Heart right ventricle (tissue), 16 donors: ENCODE measurements at regions of chr20 and their contacts with region 1.

Region 1: DNA sequence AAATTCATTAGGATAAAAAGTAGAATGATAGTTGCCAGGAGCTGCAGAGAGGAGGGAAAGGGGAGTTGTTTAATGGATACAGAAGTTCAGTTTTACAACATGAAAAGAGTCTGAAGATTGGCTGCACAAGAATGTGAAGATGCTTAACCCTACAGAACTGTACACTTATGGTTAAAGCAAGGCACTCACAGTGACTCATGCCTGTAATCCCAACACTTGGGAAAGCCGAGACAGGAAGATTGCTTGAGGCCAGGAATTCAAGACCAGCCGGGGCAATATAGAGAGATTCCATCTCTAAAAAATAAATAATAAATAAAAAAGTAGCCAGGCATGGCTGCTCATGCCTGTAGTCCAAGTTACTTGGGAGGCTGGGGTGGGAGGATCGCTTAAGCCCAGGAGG is 174.0 kb downstream of the TASP1 start:
- DNase-seq: no peak
- ATAC-seq: no peak
- H3K4me3 ChIP-seq: no peak overlapping the region
- H3K27ac ChIP-seq: no peak overlapping the region
- H3K4me1 ChIP-seq: peaks cover 0 to 7% (median 0%) of the 10 kb centered on the region in 9 donors
- H3K27me3 ChIP-seq: no peaks in the 10 kb centered on the region
- CTCF ChIP-seq: no peak

Region 2: DNA sequence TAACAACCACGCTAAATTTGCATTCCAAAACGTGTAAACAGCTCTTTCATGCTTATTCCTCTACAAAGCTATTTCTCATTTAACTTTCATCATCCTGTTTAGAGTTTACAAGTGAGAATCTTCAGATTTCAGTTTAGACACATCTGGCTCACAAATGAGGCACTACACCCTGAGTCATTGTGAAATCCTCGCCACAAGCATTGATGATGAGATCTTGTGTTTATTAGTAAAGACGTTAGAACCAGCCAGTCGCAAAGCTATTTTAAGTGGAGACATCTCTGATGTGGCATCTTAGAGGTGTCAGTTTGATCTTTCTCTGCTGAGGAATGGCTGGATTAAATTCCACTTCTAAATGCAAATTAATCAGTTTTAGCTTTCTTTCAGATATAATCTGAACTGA is 252.0 kb before region 1 on chr20:
- intact Hi-C with region 1: no loop called
- DNase-seq: no peak
- ATAC-seq: no peak
- H3K4me3 ChIP-seq: no peak overlapping the region
- H3K27ac ChIP-seq: no peak overlapping the region
- H3K4me1 ChIP-seq: no peaks in the 10 kb centered on the region
- H3K27me3 ChIP-seq: peaks cover 0 to 32% (median 12%) of the 10 kb centered on the region in 7 donors
- CTCF ChIP-seq: no peak

Region 3: DNA sequence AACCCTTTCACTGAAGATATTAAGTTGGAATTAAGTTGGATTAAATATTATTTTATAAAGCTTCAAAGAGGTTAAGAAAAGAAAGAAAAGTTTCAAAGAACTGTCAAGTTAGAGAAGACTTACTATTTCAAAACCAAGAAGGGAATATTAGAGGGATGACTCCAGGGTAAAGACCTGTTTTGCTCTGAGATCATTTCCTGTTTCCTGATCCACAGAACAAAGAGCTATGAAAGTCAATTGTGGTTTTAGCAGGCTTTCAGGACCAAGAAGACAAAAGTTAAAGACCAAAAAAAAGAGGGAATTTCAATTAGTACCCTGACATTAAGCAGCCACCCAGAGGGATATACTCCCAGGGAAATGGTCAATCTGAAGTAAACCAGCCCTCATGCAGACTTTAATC is 300.6 kb after region 1 on chr20:
- intact Hi-C with region 1: loop called in 2 of 10 experiments (anchors 5 to 10 kb)
- DNase-seq: no peak
- ATAC-seq: no peak
- H3K4me3 ChIP-seq: no peak overlapping the region
- H3K27ac ChIP-seq: no peak overlapping the region
- H3K4me1 ChIP-seq: peaks cover 0 to 3% (median 0%) of the 10 kb centered on the region in 9 donors
- H3K27me3 ChIP-seq: no peaks in the 10 kb centered on the region
- CTCF ChIP-seq: no peak

Region 4: DNA sequence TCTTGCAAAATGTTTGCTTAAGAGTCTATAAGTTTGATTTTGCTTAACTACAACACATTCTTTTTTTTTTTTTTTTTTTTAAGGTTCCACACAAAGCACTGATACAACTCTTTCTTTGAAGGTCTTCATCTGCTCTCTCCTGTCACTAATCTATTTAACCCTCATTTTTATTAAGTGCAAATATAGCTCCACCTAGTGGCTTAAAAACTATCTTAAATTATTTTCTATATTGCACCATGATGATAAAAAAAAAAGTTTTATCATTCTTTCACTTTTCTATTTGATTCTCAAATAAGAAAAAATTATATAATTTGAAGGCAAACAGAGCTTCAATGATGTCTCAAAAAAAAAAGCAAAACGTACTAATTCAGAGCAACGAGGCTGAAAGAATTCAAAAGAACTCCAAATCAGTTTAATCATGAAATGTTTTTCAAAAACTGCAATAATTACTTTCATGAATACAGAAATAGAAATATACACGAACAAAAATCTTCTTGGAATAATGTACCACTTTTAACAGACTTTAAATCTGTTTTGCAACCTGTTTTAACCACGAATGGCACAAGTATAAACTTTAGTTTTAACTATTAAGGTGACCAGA is 307.3 kb after region 1 on chr20:
- intact Hi-C with region 1: loop called in 2 of 10 experiments (anchors 5 to 10 kb)
- DNase-seq: no peak
- ATAC-seq: no peak
- H3K4me3 ChIP-seq: no peak overlapping the region
- H3K27ac ChIP-seq: no peak overlapping the region
- H3K4me1 ChIP-seq: no peaks in the 10 kb centered on the region
- H3K27me3 ChIP-seq: no peaks in the 10 kb centered on the region
- CTCF ChIP-seq: peak; percentile 13 to 70 (median 58)